AG04449 (cell line): ENCODE measurements at regions of chr20 and their contacts with region 1.

Region 1: DNA sequence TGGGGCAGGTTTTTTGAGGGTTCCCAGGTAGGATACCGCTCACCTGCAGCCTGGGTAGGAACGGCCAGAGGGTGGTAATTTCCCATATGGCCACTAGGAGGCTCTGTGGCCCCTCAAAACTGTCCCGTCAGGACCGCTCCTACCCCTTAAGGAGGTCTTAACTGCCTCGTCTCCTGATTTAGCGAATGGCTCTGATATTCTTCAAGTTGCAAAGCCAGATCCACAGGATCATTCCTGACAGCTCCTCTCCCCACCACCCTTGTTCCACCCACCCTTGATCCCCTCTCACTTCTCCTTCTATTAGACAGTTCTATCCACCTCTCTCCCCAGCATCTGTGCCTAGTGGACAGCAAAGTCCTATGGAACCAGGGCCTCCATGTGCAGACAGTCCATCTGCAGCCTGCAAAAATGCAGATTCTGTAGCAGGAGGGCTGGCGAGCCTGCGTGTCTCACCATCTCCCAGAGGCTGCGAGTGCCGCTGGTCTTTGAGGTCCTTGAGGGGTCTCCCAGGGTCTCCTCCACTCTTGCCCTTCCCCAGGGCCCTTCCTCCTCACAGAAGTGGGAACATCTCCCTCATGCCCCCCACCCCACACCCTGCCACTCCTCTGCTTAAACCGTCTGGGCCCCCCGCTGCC is 34.3 kb upstream of the ZBP1 start:
- DNase-seq: no peak
- H3K4me3 ChIP-seq: no peak overlapping the region
- CTCF ChIP-seq: peak; percentile 89

Region 2: DNA sequence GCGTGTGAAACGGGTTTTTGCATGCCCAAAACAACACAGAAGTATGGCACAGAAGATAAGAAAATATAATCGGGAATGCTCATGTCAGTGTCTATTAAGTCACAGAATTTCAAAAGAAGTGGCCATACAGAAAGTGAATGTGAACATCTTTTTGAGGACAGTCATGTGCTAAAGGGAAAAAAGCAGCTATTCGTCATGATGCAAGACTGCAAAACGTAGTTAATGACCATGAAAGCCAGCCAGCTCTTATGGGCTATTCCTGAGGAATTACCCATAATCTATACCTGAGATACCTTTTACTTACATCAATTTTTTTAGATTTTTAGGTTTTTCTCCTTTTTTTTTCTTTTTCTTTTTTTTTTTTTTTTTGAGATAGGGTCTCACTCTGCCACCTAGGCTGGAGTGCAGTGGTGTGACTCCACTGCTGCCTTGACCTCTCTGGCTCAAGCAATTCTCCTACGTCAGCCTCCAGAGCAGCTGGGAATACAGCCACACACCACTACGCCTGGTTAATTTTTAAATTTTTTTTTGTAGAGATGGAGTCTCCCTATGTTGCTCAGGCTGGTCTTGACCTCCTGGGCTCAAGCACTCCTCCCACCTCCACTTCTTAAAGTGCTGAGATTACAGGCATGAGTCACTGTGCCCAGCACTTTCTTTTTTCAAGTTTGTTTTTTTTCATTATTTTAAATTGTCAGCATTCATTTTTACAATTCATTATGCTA is 16.1 kb before region 1 on chr20:
- CTCF ChIA-PET with region 1: interaction called, 28 read pairs
- POLR2A ChIA-PET with region 1: no interaction called
- DNase-seq: no peak
- H3K4me3 ChIP-seq: no peak overlapping the region
- CTCF ChIP-seq: no peak

Region 3: DNA sequence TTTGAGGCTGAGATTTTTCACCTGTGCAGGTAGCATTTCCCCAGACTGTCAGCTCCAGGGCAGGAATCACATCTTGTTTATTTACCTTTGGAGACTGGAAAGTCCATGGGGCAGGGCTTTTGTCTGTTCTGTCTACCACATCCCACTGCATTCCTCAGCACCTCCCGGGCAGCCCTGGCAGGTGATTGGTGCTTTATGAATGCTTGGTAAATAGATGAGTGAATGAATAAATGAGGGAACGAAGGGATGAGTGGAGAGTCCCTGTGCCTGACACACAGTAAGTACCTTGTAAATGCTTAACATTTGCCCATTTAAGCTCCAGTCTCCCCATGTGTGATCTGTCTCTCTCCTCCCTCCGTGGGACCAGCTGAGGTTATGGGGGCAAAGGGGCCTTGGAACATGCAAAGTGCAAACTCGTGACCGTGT is 125.0 kb after region 1 on chr20:
- CTCF ChIA-PET with region 1: no interaction called
- POLR2A ChIA-PET with region 1: no interaction called
- DNase-seq: no peak
- H3K4me3 ChIP-seq: no peak overlapping the region
- CTCF ChIP-seq: no peak

Region 4: GRCh38 chr20:58179432-58180099 is 525.1 kb after region 1 on chr20:
- CTCF ChIA-PET with region 1: interaction called, 42 read pairs
- POLR2A ChIA-PET with region 1: no interaction called
- DNase-seq: no peak
- H3K4me3 ChIP-seq: peak overlapping the region; percentile 43
- CTCF ChIP-seq: peak; percentile 92